Naive thymus-derived CD4-positive, alpha-beta T cell (primary cell): ENCODE measurements at regions of chr3 and their contacts with region 1.

Region 1: DNA sequence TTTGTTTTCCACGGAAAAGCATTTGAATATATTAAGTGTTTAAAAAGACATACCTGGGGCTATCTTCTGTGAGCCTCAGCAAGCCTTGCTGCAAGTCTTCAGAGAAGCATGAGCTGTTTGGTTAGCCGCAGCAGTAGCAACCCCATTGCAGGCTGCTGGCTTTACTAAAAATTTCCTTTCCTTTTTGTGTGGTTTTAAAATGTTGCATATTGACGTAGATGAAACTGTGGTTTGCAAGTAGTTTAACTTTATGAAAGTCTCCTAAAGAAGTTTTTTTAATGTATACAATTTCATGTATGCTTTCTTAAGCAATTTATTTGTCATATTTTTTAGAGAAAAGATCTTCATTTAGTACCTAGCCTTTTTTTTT is at the start of gene GPR171:
- DNase-seq: peak in 8 of 9 donors; percentile 62 to 88 (median 82)
- ATAC-seq: peak; percentile 95
- H3K4me3 ChIP-seq: peak within 1 kb of the TSS; percentile 79
- H3K4me3 Mint-ChIP-seq: peak within 1 kb of the TSS; percentile 72 to 94 (median 84)
- H3K27ac ChIP-seq: peak within 1 kb of the TSS; percentile 75
- H3K27ac Mint-ChIP-seq: peak within 1 kb of the TSS; percentile 76 to 98 (median 94)
- H3K4me1 ChIP-seq: peaks cover 45 to 57% of the 10 kb centered on the region in 2 donors
- H3K4me1 Mint-ChIP-seq: peaks cover 34 to 82% (median 71%) of the 10 kb centered on the region in 7 donors
- H3K27me3 ChIP-seq: no peaks in the 10 kb centered on the region
- H3K27me3 Mint-ChIP-seq: no peaks in the 10 kb centered on the region
- total RNA-seq, gene GPR171: 16.0 to 251 (median 63.4) TPM

Region 2: GRCh38 chr3:151183265-151183671 is 19.8 kb before region 1 on chr3:
- CTCF ChIA-PET with region 1: no interaction called
- POLR2A ChIA-PET with region 1: interaction called, 88 read pairs
- intact Hi-C with region 1: loop called (anchors 1 kb)
- DNase-seq: peak in 4 of 9 donors; percentile 13 to 65 (median 54)
- ATAC-seq: peak; percentile 69
- H3K4me3 ChIP-seq: no peak overlapping the region
- H3K4me3 Mint-ChIP-seq: peak overlapping the region; percentile 58 to 85 (median 78)
- H3K27ac ChIP-seq: peak overlapping the region; percentile 38
- H3K27ac Mint-ChIP-seq: peak overlapping the region; percentile 66 to 90 (median 83)
- H3K4me1 ChIP-seq: peaks cover 4 to 15% of the 10 kb centered on the region in 2 donors
- H3K4me1 Mint-ChIP-seq: peaks cover 20 to 60% (median 44%) of the 10 kb centered on the region in 7 donors
- H3K27me3 ChIP-seq: no peaks in the 10 kb centered on the region
- H3K27me3 Mint-ChIP-seq: peaks cover 0 to 4% (median 0%) of the 10 kb centered on the region in 5 donors

Region 3: GRCh38 chr3:151191095-151191494 is 11.9 kb before region 1 on chr3:
- CTCF ChIA-PET with region 1: interaction called, 8 read pairs
- POLR2A ChIA-PET with region 1: interaction called, 88 read pairs
- intact Hi-C with region 1: loop called (anchors 1 kb)
- DNase-seq: no peak
- ATAC-seq: no peak
- H3K4me3 ChIP-seq: no peak overlapping the region
- H3K4me3 Mint-ChIP-seq: no peak overlapping the region
- H3K27ac ChIP-seq: no peak overlapping the region
- H3K27ac Mint-ChIP-seq: peak overlapping the region in 1 of 9 donors; percentile 68
- H3K4me1 ChIP-seq: peaks cover 0 to 9% of the 10 kb centered on the region in 2 donors
- H3K4me1 Mint-ChIP-seq: peaks cover 7 to 60% (median 26%) of the 10 kb centered on the region in 7 donors
- H3K27me3 ChIP-seq: no peaks in the 10 kb centered on the region
- H3K27me3 Mint-ChIP-seq: no peaks in the 10 kb centered on the region

Region 4: GRCh38 chr3:151268267-151269235 is 65.5 kb after region 1 on chr3:
- CTCF ChIA-PET with region 1: no interaction called
- POLR2A ChIA-PET with region 1: interaction called, 3 read pairs
- intact Hi-C with region 1: loop called in 1 of 2 experiments (anchors 2 kb)
- DNase-seq: peak in 5 of 9 donors; percentile 15 to 52 (median 23)
- ATAC-seq: peak; percentile 39
- H3K4me3 ChIP-seq: no peak overlapping the region
- H3K4me3 Mint-ChIP-seq: peak overlapping the region in 9 of 10 donors; percentile 28 to 84 (median 70)
- H3K27ac ChIP-seq: peak overlapping the region; percentile 1
- H3K27ac Mint-ChIP-seq: peak overlapping the region; percentile 70 to 92 (median 83)
- H3K4me1 ChIP-seq: no peaks in the 10 kb centered on the region
- H3K4me1 Mint-ChIP-seq: peaks cover 8 to 58% (median 22%) of the 10 kb centered on the region in 7 donors
- H3K27me3 ChIP-seq: no peaks in the 10 kb centered on the region
- H3K27me3 Mint-ChIP-seq: peaks cover 0 to 4% (median 0%) of the 10 kb centered on the region in 5 donors

Region 5: GRCh38 chr3:152258448-152259393 is 1055.7 kb after region 1 on chr3:
- CTCF ChIA-PET with region 1: no interaction called
- POLR2A ChIA-PET with region 1: no interaction called
- intact Hi-C with region 1: loop called in 1 of 2 experiments (anchors 5 kb)
- DNase-seq: peak in 6 of 9 donors; percentile 34 to 90 (median 52)
- ATAC-seq: peak; percentile 87
- H3K4me3 ChIP-seq: peak overlapping the region; percentile 3
- H3K4me3 Mint-ChIP-seq: peak overlapping the region; percentile 71 to 87 (median 81)
- H3K27ac ChIP-seq: peak overlapping the region; percentile 83
- H3K27ac Mint-ChIP-seq: peak overlapping the region; percentile 83 to 99 (median 95)
- H3K4me1 ChIP-seq: peaks cover 72 to 78% of the 10 kb centered on the region in 2 donors
- H3K4me1 Mint-ChIP-seq: peaks cover 68 to 98% (median 90%) of the 10 kb centered on the region in 7 donors
- H3K27me3 ChIP-seq: no peaks in the 10 kb centered on the region
- H3K27me3 Mint-ChIP-seq: no peaks in the 10 kb centered on the region